Mammary epithelial cell (primary cell): ENCODE measurements at regions of chr5 and their contacts with region 1.

Region 1: DNA sequence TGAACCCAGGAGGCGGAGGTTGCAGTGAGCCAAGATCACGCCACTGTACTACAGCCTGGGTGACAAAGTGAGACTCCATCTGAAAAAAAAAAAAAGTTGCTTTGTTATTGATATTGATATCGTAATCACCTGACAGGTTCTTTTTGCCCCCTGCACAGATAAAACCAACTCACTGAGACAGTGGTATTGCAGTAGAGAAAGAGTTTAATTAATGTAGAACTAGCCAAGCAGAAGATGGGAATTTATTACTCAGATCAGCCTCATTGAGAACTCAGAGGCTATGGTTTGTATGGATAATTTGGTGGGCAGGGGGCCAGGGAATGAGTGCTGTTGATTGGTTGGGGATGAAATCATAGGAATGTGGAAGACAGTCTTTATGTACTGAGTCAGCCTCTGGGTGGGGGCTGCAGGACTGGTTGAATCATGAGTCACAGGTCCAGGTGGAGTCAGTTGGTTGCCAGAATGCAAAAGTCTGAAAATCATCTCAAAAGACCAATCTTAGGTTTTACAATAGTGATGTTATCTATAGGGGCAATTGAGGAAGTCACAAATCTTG is 35.8 kb upstream of the MEGF10 start:
- DNase-seq: peak; percentile 86
- H3K4me3 ChIP-seq: no peak overlapping the region
- H3K27ac ChIP-seq: peak overlapping the region; percentile 47
- H3K4me1 ChIP-seq: no peaks in the 10 kb centered on the region
- H3K27me3 ChIP-seq: no peaks in the 10 kb centered on the region
- CTCF ChIP-seq: no peak

Region 2: DNA sequence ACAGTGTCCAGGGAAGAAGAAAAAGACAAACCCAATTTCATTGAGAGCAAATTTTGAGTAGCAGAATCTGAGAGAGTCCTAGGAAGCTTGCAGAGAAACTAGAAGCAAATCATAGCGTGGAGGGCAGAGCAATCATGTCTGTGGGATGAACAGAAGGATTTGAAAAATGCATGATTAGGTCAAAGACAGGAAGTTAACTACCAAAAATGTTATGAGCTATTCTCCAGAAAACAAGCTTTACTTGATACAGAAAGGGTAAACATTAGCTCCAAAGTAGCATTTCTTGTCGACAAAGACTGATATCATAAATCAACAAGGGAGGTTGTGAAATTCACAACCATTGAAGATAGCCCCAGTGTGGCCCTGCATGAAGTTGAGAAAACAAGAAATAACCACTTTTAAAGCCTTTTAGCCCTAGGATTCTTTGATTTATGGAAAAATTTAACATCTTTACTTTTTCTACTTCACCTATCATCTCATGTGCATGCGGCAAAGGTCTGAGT is 61.9 kb before region 1 on chr5:
- CTCF ChIA-PET with region 1: interaction called, 12 read pairs
- dilution Hi-C with region 1: no loop called
- in situ Hi-C with region 1: no loop called
- intact Hi-C with region 1: no loop called
- DNase-seq: no peak
- H3K4me3 ChIP-seq: no peak overlapping the region
- H3K27ac ChIP-seq: no peak overlapping the region
- H3K4me1 ChIP-seq: no peaks in the 10 kb centered on the region
- H3K27me3 ChIP-seq: no peaks in the 10 kb centered on the region
- CTCF ChIP-seq: no peak

Region 3: GRCh38 chr5:128169401-128170017 is 914.7 kb after region 1 on chr5:
- CTCF ChIA-PET with region 1: no interaction called
- dilution Hi-C with region 1: no loop called
- in situ Hi-C with region 1: no loop called
- intact Hi-C with region 1: no loop called
- DNase-seq: no peak
- H3K4me3 ChIP-seq: no peak overlapping the region
- H3K27ac ChIP-seq: no peak overlapping the region
- H3K4me1 ChIP-seq: no peaks in the 10 kb centered on the region
- H3K27me3 ChIP-seq: no peaks in the 10 kb centered on the region
- CTCF ChIP-seq: no peak